ENCODE measurements at regions of chr2 and their contacts with region 1.

Region 1: DNA sequence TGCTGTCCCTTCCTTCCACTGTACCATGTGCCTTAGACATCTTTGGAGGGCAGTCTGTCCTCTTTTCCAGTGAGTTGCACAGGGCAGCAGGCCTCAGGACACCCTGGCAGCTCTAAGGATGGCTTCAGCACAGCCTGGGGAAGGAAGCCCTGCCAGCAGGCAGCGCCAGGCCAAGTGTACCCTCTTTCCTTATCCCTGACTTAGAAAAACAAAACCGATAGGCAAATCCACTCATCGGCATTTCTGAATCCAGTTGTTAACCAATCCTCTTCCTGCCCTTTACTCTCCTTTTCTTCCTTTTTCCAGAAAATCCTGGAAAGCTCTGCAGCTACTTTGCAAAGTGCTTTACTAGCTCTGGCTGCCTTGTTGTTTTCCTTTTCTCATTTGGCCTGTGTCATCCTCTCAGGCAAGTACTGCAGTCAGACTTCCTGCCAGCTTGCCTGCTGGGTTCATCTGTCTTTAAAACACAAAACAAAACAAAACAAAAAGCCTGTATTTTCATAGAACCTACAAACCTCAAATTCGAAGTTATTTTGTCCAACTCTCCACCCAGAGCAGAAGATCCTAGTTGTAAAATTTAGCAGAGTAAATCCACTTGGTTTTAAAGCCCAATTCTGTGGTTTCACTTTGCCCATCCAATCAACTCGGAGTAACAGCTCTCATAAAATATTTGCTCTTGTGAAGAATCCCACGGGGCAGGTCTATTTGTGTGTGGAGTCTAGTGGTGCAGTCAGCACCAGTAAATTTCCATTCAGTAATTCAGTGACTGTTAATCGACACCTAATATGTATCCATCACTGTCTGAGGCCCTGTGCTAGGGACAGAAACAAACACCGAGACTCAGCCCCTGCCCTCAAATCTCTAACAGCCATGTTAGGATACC is 45.2 kb downstream of the PCBP1 start:
- DNase-seq: peak; percentile 21
- H3K4me3 Mint-ChIP-seq: peak overlapping the region; percentile 59
- H3K27ac Mint-ChIP-seq: peak overlapping the region; percentile 81
- H3K4me1 Mint-ChIP-seq: peaks cover 46% of the 10 kb centered on the region
- H3K27me3 Mint-ChIP-seq: no peaks in the 10 kb centered on the region
- CTCF ChIP-seq: no peak

Region 2: GRCh38 chr2:70104231-70105111 is 28.0 kb before region 1 on chr2:
- CTCF ChIA-PET with region 1: no interaction called
- intact Hi-C with region 1: loop called (anchors 2 kb)
- DNase-seq: peak; percentile 65
- H3K4me3 Mint-ChIP-seq: peak overlapping the region; percentile 55
- H3K27ac Mint-ChIP-seq: peak overlapping the region; percentile 92
- H3K4me1 Mint-ChIP-seq: peaks cover 53% of the 10 kb centered on the region
- H3K27me3 Mint-ChIP-seq: no peaks in the 10 kb centered on the region
- CTCF ChIP-seq: no peak

Region 3: GRCh38 chr2:70391988-70392387 is 259.5 kb after region 1 on chr2:
- CTCF ChIA-PET with region 1: no interaction called
- intact Hi-C with region 1: no loop called
- DNase-seq: no peak
- H3K4me3 Mint-ChIP-seq: no peak overlapping the region
- H3K27ac Mint-ChIP-seq: no peak overlapping the region
- H3K4me1 Mint-ChIP-seq: peaks cover 8% of the 10 kb centered on the region
- H3K27me3 Mint-ChIP-seq: peaks cover 5% of the 10 kb centered on the region
- CTCF ChIP-seq: no peak

Measured in Calu3 (cell line).